Caco-2 (cell line): ENCODE measurements at regions of chr10 and their contacts with region 1.

Region 1: GRCh38 chr10:100229819-100230422 is 525 bp upstream of the CHUK start:
- DNase-seq: no peak
- H3K4me3 ChIP-seq: peak overlapping the region; percentile 57
- H3K4me3 Mint-ChIP-seq: peak overlapping the region; percentile 93
- H3K27ac Mint-ChIP-seq: peak overlapping the region; percentile 83
- H3K4me1 ChIP-seq: no peaks in the 10 kb centered on the region
- H3K4me1 Mint-ChIP-seq: peaks cover 22% of the 10 kb centered on the region
- H3K27me3 ChIP-seq: no peaks in the 10 kb centered on the region
- H3K27me3 Mint-ChIP-seq: no peaks in the 10 kb centered on the region
- CTCF ChIP-seq: no peak

Region 2: GRCh38 chr10:100216006-100216405 is 13.9 kb before region 1 on chr10:
- CTCF ChIA-PET with region 1: no interaction called
- POLR2A ChIA-PET with region 1: no interaction called
- intact Hi-C with region 1: loop called (anchors 1 kb)
- DNase-seq: no peak
- H3K4me3 ChIP-seq: no peak overlapping the region
- H3K4me3 Mint-ChIP-seq: no peak overlapping the region
- H3K27ac Mint-ChIP-seq: no peak overlapping the region
- H3K4me1 ChIP-seq: no peaks in the 10 kb centered on the region
- H3K4me1 Mint-ChIP-seq: peaks cover 3% of the 10 kb centered on the region
- H3K27me3 ChIP-seq: no peaks in the 10 kb centered on the region
- H3K27me3 Mint-ChIP-seq: no peaks in the 10 kb centered on the region
- CTCF ChIP-seq: no peak

Region 3: DNA sequence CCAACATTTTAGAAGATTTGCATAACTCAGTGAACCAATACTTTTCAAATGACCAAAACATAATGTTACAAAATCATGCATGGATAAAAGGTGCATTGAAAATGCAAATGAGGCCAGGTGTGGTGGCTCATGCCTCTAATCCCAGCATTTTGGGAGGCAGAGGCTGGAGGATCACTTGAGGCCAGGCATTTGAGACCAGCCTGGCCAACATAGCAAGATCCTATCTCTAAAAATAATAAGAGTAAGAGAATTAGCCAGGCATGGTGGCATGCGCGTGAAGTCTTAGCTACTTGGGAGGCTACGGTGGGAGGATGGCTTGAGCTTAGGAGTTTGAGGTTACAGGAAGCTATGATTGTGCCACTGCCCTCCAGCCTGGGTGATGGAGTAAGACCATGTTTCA is 150.5 kb after region 1 on chr10:
- CTCF ChIA-PET with region 1: no interaction called
- POLR2A ChIA-PET with region 1: no interaction called
- intact Hi-C with region 1: no loop called
- DNase-seq: no peak
- H3K4me3 ChIP-seq: no peak overlapping the region
- H3K4me3 Mint-ChIP-seq: no peak overlapping the region
- H3K27ac Mint-ChIP-seq: no peak overlapping the region
- H3K4me1 ChIP-seq: peaks cover 7% of the 10 kb centered on the region
- H3K4me1 Mint-ChIP-seq: peaks cover 7% of the 10 kb centered on the region
- H3K27me3 ChIP-seq: no peaks in the 10 kb centered on the region
- H3K27me3 Mint-ChIP-seq: no peaks in the 10 kb centered on the region
- CTCF ChIP-seq: no peak

Region 4: DNA sequence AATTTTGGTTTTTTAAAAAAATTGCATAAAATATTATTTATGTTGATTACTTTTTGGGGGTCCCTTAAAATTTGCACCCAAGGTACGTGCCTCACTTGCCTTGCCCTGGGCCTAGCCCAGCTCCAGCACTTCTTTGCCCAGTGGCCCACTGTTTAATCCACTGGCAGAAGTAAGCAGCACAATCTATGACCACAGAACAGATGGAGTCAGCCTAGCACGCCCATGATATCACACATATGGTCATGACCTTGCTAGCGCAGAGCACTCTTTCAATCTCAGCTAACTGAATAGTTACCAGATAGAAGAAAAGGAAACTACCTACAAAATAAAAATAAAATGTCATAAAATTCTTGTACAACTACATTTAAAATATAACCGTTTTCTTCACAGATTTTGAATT is 1582.7 kb after region 1 on chr10:
- CTCF ChIA-PET with region 1: no interaction called
- POLR2A ChIA-PET with region 1: no interaction called
- intact Hi-C with region 1: no loop called
- DNase-seq: no peak
- H3K4me3 ChIP-seq: no peak overlapping the region
- H3K4me3 Mint-ChIP-seq: no peak overlapping the region
- H3K27ac Mint-ChIP-seq: no peak overlapping the region
- H3K4me1 ChIP-seq: peaks cover 6% of the 10 kb centered on the region
- H3K4me1 Mint-ChIP-seq: peaks cover 13% of the 10 kb centered on the region
- H3K27me3 ChIP-seq: no peaks in the 10 kb centered on the region
- H3K27me3 Mint-ChIP-seq: no peaks in the 10 kb centered on the region
- CTCF ChIP-seq: no peak